MCF 10A (cell line): ENCODE measurements at regions of chr3 and their contacts with region 1.

Region 1: DNA sequence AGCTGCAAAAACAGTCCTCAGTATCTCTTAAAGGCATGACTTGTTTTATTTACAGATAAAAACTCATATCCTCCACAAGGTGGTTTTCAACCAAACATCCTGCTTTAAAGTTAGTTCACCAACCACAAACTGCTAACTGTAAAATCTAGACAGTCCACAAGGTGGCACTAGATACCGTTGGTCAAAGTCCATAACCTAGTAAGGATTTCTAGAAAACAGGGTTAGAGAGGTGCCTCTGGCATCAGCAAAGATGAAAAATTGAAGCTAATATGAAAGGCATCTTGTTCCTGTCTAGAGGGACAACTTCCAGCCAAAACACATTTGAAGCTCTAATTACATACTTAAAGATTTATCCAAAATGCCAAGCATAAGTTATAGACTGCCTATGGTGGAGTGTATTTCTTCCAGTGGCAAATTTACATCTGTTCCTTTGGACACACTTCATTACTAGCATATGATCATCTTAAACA is 56.0 kb downstream of the ZMAT3 start:
- DNase-seq: peak; percentile 82
- H3K4me3 Mint-ChIP-seq: no peak overlapping the region
- H3K27ac Mint-ChIP-seq: peak overlapping the region; percentile 54
- H3K4me1 Mint-ChIP-seq: no peaks in the 10 kb centered on the region
- H3K27me3 Mint-ChIP-seq: no peaks in the 10 kb centered on the region
- CTCF ChIP-seq: peak; percentile 81

Region 2: GRCh38 chr3:179037351-179037750 is 21.8 kb after region 1 on chr3:
- CTCF ChIA-PET with region 1: interaction called, 10 read pairs
- POLR2A ChIA-PET with region 1: interaction called, 9 read pairs
- intact Hi-C with region 1: no loop called
- DNase-seq: peak; percentile 96
- H3K4me3 Mint-ChIP-seq: no peak overlapping the region
- H3K27ac Mint-ChIP-seq: peak overlapping the region; percentile 92
- H3K4me1 Mint-ChIP-seq: no peaks in the 10 kb centered on the region
- H3K27me3 Mint-ChIP-seq: no peaks in the 10 kb centered on the region
- CTCF ChIP-seq: no peak

Region 3: GRCh38 chr3:179063945-179064560 is 48.5 kb after region 1 on chr3:
- CTCF ChIA-PET with region 1: interaction called, 19 read pairs
- POLR2A ChIA-PET with region 1: interaction called, 5 read pairs
- intact Hi-C with region 1: loop called (anchors 1 kb)
- DNase-seq: peak; percentile 82
- H3K4me3 Mint-ChIP-seq: peak overlapping the region; percentile 15
- H3K27ac Mint-ChIP-seq: peak overlapping the region; percentile 97
- H3K4me1 Mint-ChIP-seq: peaks cover 73% of the 10 kb centered on the region
- H3K27me3 Mint-ChIP-seq: no peaks in the 10 kb centered on the region
- CTCF ChIP-seq: no peak

Region 4: DNA sequence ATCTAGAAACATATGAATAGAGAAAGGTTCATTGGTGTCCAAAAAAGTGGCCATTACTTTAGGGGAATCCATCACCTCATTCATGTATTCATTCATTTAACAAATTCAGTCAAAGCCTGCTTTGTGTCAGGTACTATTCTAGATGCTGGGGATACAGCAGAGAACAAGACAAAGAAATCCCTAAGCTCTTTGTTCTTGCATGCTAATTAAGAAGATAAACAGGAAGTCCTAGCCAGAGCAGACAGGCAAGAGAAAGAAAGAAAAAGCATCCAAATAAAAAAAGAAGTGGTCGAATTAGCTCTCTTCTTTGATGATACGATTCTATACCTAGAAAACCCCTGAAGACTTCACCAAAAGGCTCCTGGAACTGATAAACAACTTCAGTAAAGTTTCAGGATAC is 68.4 kb after region 1 on chr3:
- CTCF ChIA-PET with region 1: interaction called, 15 read pairs
- POLR2A ChIA-PET with region 1: interaction called, 4 read pairs
- intact Hi-C with region 1: no loop called
- DNase-seq: no peak
- H3K4me3 Mint-ChIP-seq: no peak overlapping the region
- H3K27ac Mint-ChIP-seq: no peak overlapping the region
- H3K4me1 Mint-ChIP-seq: no peaks in the 10 kb centered on the region
- H3K27me3 Mint-ChIP-seq: no peaks in the 10 kb centered on the region
- CTCF ChIP-seq: no peak

Region 5: DNA sequence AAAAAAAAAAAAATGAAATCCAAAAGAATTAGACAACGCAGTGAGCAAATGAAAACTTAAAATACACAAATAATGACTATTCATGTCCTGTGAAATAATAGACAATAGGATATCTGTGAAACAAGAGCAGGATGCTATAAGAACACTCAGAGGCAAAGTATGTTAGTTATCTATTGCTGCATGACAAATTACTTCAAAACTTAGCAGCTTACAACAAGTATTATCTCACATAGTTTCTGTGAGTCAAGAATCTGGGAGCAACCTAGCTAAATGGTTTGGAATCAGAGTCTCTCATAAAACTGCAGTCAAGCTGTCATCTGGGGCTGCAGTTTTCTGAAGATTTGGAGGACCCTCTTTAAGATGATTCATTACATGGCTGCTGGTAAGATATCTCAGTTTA is 92.5 kb after region 1 on chr3:
- CTCF ChIA-PET with region 1: interaction called, 9 read pairs
- POLR2A ChIA-PET with region 1: interaction called, 4 read pairs
- intact Hi-C with region 1: loop called (anchors 1 kb)
- DNase-seq: no peak
- H3K4me3 Mint-ChIP-seq: no peak overlapping the region
- H3K27ac Mint-ChIP-seq: no peak overlapping the region
- H3K4me1 Mint-ChIP-seq: no peaks in the 10 kb centered on the region
- H3K27me3 Mint-ChIP-seq: no peaks in the 10 kb centered on the region
- CTCF ChIP-seq: no peak

Region 6: GRCh38 chr3:179562591-179563270 is 547.1 kb after region 1 on chr3 and contains the start of gene ACTL6A:
- CTCF ChIA-PET with region 1: interaction called, 3 read pairs
- POLR2A ChIA-PET with region 1: no interaction called
- intact Hi-C with region 1: loop called (anchors 1 kb)
- DNase-seq: peak; percentile 100
- H3K4me3 Mint-ChIP-seq: peak within 1 kb of the TSS; percentile 97
- H3K27ac Mint-ChIP-seq: peak within 1 kb of the TSS; percentile 76
- H3K4me1 Mint-ChIP-seq: peaks cover 19% of the 10 kb centered on the region
- H3K27me3 Mint-ChIP-seq: no peaks in the 10 kb centered on the region
- CTCF ChIP-seq: no peak
- total RNA-seq, gene ACTL6A: 46.2 and 57.1 TPM in 2 replicates